SK-N-SH (cell line): ENCODE measurements at regions of chr16 and their contacts with region 1.

Region 1: GRCh38 chr16:81366316-81366932 is 51.7 kb downstream of the GAN start:
- DNase-seq: peak; percentile 63
- H3K4me3 ChIP-seq: no peak overlapping the region
- H3K27ac ChIP-seq: no peak overlapping the region
- H3K4me1 ChIP-seq: no peaks in the 10 kb centered on the region
- H3K27me3 ChIP-seq: no peaks in the 10 kb centered on the region
- CTCF ChIP-seq: peak; percentile 80
- EP300 ChIP-seq: no peak
- RAD21 ChIP-seq: peak; percentile 90

Region 2: GRCh38 chr16:81279395-81279794 is 87.0 kb before region 1 on chr16:
- CTCF ChIA-PET with region 1: no interaction called
- POLR2A ChIA-PET with region 1: no interaction called
- DNase-seq: no peak
- H3K4me3 ChIP-seq: no peak overlapping the region
- H3K27ac ChIP-seq: no peak overlapping the region
- H3K4me1 ChIP-seq: peaks cover 0 to 8% of the 10 kb centered on the region in 2 experiments; a peak in 1 of 4 replicates
- H3K27me3 ChIP-seq: no peaks in the 10 kb centered on the region
- CTCF ChIP-seq: no peak
- EP300 ChIP-seq: no peak
- RAD21 ChIP-seq: no peak

Region 3: DNA sequence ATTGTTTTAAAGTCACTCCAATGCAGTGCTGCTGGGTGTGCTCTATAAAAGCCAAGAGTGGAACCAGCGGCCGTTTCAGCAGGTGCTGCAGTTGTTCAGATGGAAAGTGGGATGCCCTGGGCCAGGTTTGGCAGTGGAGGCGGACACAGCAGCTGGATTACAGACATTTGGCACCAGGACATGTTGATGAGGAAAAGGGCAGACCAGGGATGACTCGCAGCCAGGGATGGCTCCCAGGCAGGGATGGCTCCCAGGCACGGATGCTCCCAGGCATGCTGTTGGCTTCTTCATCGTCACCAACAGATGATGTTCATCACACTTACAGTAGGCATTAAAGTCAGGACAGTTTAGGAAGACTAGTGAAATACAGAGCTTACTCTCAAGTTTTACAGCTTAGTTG is 41.6 kb before region 1 on chr16:
- CTCF ChIA-PET with region 1: no interaction called
- POLR2A ChIA-PET with region 1: no interaction called
- DNase-seq: no peak
- H3K4me3 ChIP-seq: no peak overlapping the region
- H3K27ac ChIP-seq: no peak overlapping the region
- H3K4me1 ChIP-seq: peaks cover 10 to 11% of the 10 kb centered on the region in 2 experiments; a peak in 3 of 4 replicates
- H3K27me3 ChIP-seq: no peaks in the 10 kb centered on the region
- CTCF ChIP-seq: no peak
- EP300 ChIP-seq: no peak
- RAD21 ChIP-seq: no peak

Region 4: DNA sequence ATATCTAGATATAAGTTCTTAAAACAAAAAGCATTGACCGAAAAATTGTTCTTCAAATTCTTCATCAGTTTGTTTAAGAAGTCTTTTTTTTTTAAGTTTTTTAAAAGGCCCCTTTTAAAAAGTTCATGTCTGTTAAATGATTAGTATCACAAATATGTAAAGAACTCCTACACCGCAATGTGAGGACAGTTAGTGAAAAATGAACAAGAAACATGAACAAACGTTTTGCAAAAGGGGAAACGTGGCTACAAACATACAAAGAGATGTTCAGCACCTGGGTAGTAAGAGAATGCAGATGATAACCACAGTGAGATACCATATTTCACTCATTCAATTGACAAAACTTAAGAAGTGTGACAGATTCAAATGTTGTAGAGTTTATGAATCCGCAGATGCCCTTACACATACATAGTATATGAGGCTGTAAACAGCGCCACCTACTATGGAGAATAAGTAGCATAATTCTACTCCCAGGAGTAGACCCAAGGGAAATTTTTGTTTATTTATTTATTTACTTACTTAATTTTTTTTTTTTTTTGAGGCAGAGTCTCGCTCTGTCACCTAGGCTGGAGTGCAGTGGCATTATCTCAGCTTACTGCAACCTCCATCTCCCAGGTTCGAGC is 16.3 kb before region 1 on chr16:
- CTCF ChIA-PET with region 1: interaction called, 10 read pairs
- POLR2A ChIA-PET with region 1: no interaction called
- DNase-seq: no peak
- H3K4me3 ChIP-seq: no peak overlapping the region
- H3K27ac ChIP-seq: no peak overlapping the region
- H3K4me1 ChIP-seq: no peaks in the 10 kb centered on the region
- H3K27me3 ChIP-seq: no peaks in the 10 kb centered on the region
- CTCF ChIP-seq: peak; percentile 22
- EP300 ChIP-seq: no peak
- RAD21 ChIP-seq: peak; percentile 37

Region 5: GRCh38 chr16:81376880-81377279 is 10.5 kb after region 1 on chr16:
- CTCF ChIA-PET with region 1: interaction called, 10 read pairs
- POLR2A ChIA-PET with region 1: no interaction called
- DNase-seq: no peak
- H3K4me3 ChIP-seq: no peak overlapping the region
- H3K27ac ChIP-seq: no peak overlapping the region
- H3K4me1 ChIP-seq: peaks cover 0 to 6% of the 10 kb centered on the region in 2 experiments; a peak in 2 of 4 replicates
- H3K27me3 ChIP-seq: no peaks in the 10 kb centered on the region
- CTCF ChIP-seq: no peak
- EP300 ChIP-seq: no peak
- RAD21 ChIP-seq: no peak

Region 6: DNA sequence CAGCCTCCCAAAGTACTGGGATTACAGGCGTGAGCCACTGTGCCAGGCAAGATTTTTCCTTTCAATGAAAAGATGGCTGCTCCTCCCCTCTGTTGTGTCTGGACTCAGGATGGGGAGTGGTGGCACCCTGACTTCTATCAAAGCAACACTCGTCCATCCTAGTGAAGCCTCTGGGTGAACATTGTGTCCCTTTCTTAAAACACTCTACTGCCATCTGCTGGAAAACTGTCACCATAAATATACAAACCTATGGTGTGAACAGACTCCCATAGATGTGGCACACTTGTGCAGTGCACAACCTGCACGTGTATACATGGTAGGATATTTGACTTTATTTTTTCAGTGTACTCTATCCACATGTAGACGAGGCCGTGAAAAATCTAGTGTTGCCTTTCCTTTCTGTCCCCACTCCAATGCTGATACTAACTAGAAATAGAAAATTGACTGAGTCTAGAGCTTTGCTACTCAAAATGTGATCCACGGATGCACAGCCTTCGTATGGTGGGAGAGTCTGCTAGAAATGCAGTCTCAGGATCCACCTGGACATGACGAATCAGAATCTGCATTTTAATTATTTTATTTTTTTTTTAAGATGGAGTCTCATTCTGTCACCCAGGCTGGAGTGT is 356.8 kb after region 1 on chr16:
- CTCF ChIA-PET with region 1: interaction called, 23 read pairs
- POLR2A ChIA-PET with region 1: no interaction called
- DNase-seq: peak; percentile 83
- H3K4me3 ChIP-seq: peak overlapping the region in 1 of 2 experiments; percentile 4; a peak in 1 of 4 replicates
- H3K27ac ChIP-seq: no peak overlapping the region
- H3K4me1 ChIP-seq: no peaks in the 10 kb centered on the region
- H3K27me3 ChIP-seq: no peaks in the 10 kb centered on the region; the same call in 1 of the 2 replicates
- CTCF ChIP-seq: peak; percentile 75
- EP300 ChIP-seq: no peak
- RAD21 ChIP-seq: peak; percentile 96

Region 7: DNA sequence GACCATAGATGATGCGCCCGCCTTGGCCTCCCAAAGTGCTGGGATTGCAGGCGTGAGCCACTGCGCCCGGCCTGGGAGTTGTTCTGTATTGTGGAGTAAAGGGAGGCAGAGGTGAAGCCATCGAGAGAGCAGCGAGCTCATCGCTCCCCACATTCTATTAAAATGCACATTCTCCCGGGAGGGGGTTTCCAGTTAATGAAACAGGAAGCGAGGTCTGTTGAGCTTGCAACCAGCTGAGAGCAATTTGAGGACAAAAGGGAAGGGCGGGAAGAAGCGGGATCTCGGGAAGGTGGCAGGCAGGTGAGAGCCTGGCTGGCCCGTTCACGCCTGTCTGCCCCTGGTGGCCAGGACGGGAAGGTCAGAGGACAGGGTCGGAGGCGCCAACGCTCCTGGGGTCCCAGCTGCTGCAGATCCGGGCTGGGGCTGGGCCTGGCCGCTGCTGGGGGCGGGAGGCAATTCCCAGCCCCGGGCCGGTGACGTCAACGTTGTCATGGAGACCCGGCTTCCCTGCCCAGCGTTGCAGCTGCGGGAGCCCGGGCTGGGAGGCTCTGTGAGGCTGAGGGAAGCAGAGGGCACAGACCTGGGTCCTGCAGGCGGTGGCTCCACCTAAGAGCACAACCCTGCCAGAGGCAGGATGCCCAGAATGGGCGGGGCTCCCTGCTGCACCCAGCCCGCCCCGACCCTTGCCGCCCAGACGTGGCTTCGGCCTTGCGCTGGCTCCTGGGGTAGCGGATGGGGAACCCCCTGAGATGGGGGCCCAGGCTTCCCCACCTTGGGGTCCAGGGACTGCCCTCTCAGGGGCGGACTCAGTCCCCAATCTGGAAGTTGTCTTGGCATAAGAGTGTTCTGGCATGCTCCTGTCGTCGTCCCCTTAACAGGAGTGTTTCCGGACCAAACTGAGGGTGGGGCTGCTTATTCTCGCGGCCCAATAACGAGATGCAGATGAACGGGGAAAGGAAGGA is 363.9 kb after region 1 on chr16:
- CTCF ChIA-PET with region 1: interaction called, 51 read pairs
- POLR2A ChIA-PET with region 1: no interaction called
- DNase-seq: peak; percentile 97
- H3K4me3 ChIP-seq: peak overlapping the region; percentile 30 to 43
- H3K27ac ChIP-seq: peak overlapping the region in 1 of 2 experiments; percentile 20; a peak in 1 of 4 replicates
- H3K4me1 ChIP-seq: peaks cover 0 to 10% of the 10 kb centered on the region in 2 experiments; a peak in 2 of 4 replicates
- H3K27me3 ChIP-seq: no peaks in the 10 kb centered on the region; the same call in 1 of the 2 replicates
- CTCF ChIP-seq: peak; percentile 58
- EP300 ChIP-seq: no peak
- RAD21 ChIP-seq: no peak; the same call in 1 of the 2 replicates

Region 8: GRCh38 chr16:81737885-81738786 is 371.7 kb after region 1 on chr16:
- CTCF ChIA-PET with region 1: interaction called, 51 read pairs
- POLR2A ChIA-PET with region 1: no interaction called
- DNase-seq: peak; percentile 84
- H3K4me3 ChIP-seq: peak overlapping the region in 1 of 2 experiments; percentile 52; a peak in 1 of 4 replicates
- H3K27ac ChIP-seq: no peak overlapping the region
- H3K4me1 ChIP-seq: peaks cover 0 to 4% of the 10 kb centered on the region in 2 experiments; a peak in 1 of 4 replicates
- H3K27me3 ChIP-seq: no peaks in the 10 kb centered on the region; the same call in 1 of the 2 replicates
- CTCF ChIP-seq: peak; percentile 85
- EP300 ChIP-seq: no peak
- RAD21 ChIP-seq: peak; percentile 96